Activated B cell treated with CpG ODN at 0.5 μM for 24 hours (primary cell): ENCODE measurements at regions of chr1 and their contacts with region 1.

Region 1: GRCh38 chr1:197761621-197762020 is 13.7 kb downstream of the DENND1B start:
- DNase-seq: no peak
- ATAC-seq: peak; percentile 67
- H3K4me3 Mint-ChIP-seq: peak overlapping the region; percentile 45
- H3K27ac Mint-ChIP-seq: no peak overlapping the region
- H3K4me1 Mint-ChIP-seq: peaks cover 18% of the 10 kb centered on the region
- H3K27me3 Mint-ChIP-seq: no peaks in the 10 kb centered on the region
- CTCF ChIP-seq: no peak

Region 2: DNA sequence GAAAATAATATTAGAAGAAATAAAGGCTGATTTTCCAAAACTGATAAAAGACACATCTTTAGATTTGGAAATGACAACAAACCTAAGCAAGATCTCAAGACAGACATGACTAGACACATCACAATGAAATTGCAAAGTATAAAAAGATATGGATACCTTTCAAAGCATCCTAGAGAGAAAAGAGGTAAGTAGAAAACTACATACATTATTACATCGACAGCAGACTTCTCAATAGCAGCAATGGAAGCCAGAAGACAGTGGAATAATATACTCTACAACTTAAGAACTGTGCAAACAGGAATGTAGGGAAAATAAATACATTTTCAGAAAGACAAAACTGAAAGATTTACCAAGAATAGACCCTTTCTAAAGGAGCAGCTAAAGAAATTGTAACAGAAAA is 36.6 kb before region 1 on chr1:
- CTCF ChIA-PET with region 1: no interaction called
- POLR2A ChIA-PET with region 1: no interaction called
- intact Hi-C with region 1: loop called (anchors 5 kb)
- DNase-seq: no peak
- ATAC-seq: no peak
- H3K4me3 Mint-ChIP-seq: no peak overlapping the region
- H3K27ac Mint-ChIP-seq: no peak overlapping the region
- H3K4me1 Mint-ChIP-seq: no peaks in the 10 kb centered on the region
- H3K27me3 Mint-ChIP-seq: no peaks in the 10 kb centered on the region
- CTCF ChIP-seq: no peak